GM10248 (cell line): ENCODE measurements at regions of chr2 and their contacts with region 1.

Region 1: DNA sequence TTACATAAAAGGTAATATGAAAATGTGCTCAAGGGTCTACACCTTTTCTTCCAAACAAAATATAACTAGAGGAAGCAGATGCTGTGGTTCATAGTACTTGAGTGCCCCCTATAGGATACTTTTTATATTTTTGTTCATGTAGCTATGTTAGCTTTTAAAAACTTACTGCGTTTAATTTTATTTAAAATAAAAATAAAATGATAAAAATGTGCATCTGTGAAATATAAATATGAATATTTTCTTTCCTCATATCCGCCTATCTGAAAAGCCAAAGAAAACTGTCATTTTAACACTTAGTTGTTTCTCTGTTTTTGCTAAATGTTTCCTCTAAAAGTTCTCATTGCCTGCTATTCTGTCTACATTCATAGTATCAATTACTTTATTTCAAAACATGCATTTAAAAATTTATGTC is 9.6 kb upstream of the LRP1B start:
- DNase-seq: no peak
- CTCF ChIP-seq: peak; percentile 36

Region 2: GRCh38 chr2:142130111-142131009 is 10.1 kb before region 1 on chr2:
- CTCF ChIA-PET with region 1: interaction called, 19 read pairs
- POLR2A ChIA-PET with region 1: no interaction called
- DNase-seq: peak; percentile 22
- CTCF ChIP-seq: no peak